ENCODE measurements at regions of chr22 and their contacts with region 1.

Region 1: GRCh38 chr22:31313366-31314147 is 21.3 kb upstream of the PIK3IP1 start:
- DNase-seq: peak; percentile 40
- ATAC-seq: peak; percentile 96
- H3K4me3 ChIP-seq: no peak overlapping the region
- H3K27ac ChIP-seq: peak overlapping the region; percentile 36; the same call in 1 of the 2 replicates
- H3K4me1 ChIP-seq: peaks cover 4 to 8% of the 10 kb centered on the region in 2 experiments
- H3K27me3 ChIP-seq: no peaks in the 10 kb centered on the region
- CTCF ChIP-seq: peak; percentile 65 to 91 (median 90); a peak in 5 of 6 replicates
- POLR2A ChIP-seq: no peak
- RAD21 ChIP-seq: peak; percentile 66

Region 2: GRCh38 chr22:30968924-30969539 is 344.5 kb before region 1 on chr22 and contains the start of gene TUG1:
- CTCF ChIA-PET with region 1: no interaction called
- POLR2A ChIA-PET with region 1: no interaction called
- RAD21 ChIA-PET with region 1: no interaction called
- intact Hi-C with region 1: loop called (anchors 5 kb)
- DNase-seq: peak; percentile 96
- ATAC-seq: peak; percentile 89
- H3K4me3 ChIP-seq: peak within 1 kb of the TSS; percentile 72 to 83
- H3K27ac ChIP-seq: peak within 1 kb of the TSS; percentile 92
- H3K4me1 ChIP-seq: peaks cover 9 to 22% of the 10 kb centered on the region in 2 experiments
- H3K27me3 ChIP-seq: no peaks in the 10 kb centered on the region
- CTCF ChIP-seq: no peak
- POLR2A ChIP-seq: no peak
- RAD21 ChIP-seq: no peak
- total RNA-seq, gene TUG1: 45.0 TPM

Region 3: GRCh38 chr22:31292236-31292989 is 21.1 kb before region 1 on chr22 and contains the start of gene PIK3IP1:
- CTCF ChIA-PET with region 1: interaction called, 14 read pairs
- POLR2A ChIA-PET with region 1: no interaction called
- RAD21 ChIA-PET with region 1: interaction called in 1 of 2 experiments, 3 read pairs
- intact Hi-C with region 1: no loop called
- DNase-seq: peak; percentile 51
- ATAC-seq: peak; percentile 63
- H3K4me3 ChIP-seq: no peak within 1 kb of the TSS
- H3K27ac ChIP-seq: no peak within 1 kb of the TSS; the same call in 1 of the 2 replicates
- H3K4me1 ChIP-seq: peaks cover 27 to 44% of the 10 kb centered on the region in 2 experiments
- H3K27me3 ChIP-seq: no peaks in the 10 kb centered on the region
- CTCF ChIP-seq: peak; percentile 18 to 31 (median 20); a peak in 1 of 6 replicates
- POLR2A ChIP-seq: no peak
- RAD21 ChIP-seq: peak; percentile 45
- total RNA-seq, gene PIK3IP1: 1.6 TPM

Region 4: DNA sequence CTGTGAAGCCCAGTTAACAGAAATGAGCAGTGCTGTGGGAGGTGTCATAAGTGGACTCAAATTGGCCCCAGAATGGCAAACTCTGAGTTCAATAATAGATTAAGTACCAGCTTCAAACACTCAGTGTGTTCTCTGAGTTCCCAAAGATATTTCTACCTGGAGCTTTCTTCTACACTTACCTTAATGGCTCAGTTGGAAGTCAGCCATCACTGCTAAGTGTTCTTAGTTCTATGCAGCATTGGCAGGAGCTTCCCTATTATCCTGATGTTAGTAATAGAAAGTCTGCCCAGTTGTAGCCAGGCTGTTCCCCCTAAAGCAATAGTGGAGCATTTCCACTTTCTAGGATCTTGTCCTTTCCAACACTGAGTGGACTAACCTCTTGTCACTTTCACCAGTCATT is 11.6 kb before region 1 on chr22:
- CTCF ChIA-PET with region 1: interaction called, 21 read pairs
- POLR2A ChIA-PET with region 1: no interaction called
- RAD21 ChIA-PET with region 1: no interaction called
- intact Hi-C with region 1: no loop called
- DNase-seq: no peak
- ATAC-seq: no peak
- H3K4me3 ChIP-seq: no peak overlapping the region
- H3K27ac ChIP-seq: no peak overlapping the region
- H3K4me1 ChIP-seq: peaks cover 3 to 4% of the 10 kb centered on the region in 2 experiments; a peak in 1 of 4 replicates
- H3K27me3 ChIP-seq: peaks cover 9% of the 10 kb centered on the region; the same call in 1 of the 2 replicates
- CTCF ChIP-seq: no peak
- POLR2A ChIP-seq: no peak
- RAD21 ChIP-seq: no peak